Cardiac septum (tissue), 1 donor: ENCODE measurements at regions of chr11 and their contacts with region 1.

Region 1: DNA sequence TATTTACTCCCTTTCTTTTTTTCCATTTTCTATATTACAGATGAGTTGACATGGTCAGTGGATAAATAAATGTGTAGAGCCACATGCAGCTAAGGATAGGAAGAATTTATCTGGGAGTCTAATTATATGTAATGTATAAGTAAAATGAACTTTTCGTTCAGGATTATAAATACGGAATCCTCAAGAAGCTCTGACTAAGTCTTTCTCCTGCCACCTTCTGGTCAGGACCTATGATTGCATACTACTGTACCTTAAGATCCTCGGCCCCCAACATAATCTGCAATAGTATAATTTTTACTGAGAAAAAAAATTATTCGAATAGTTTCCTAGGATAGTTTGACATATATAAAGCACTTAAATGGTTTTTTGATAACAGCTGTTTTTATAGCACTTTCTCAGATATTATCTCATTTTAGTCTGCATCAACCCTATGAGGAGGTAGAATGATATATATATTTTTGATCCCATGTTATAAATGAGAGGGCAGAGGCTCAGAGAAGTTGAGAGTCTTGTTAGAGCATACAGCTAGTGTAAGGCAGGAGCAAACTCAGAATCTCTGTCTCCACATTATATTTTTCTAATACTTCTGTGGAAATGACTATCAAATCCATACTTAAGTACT is 36.1 kb downstream of the CCDC90B start:
- DNase-seq: no peak

Region 2: DNA sequence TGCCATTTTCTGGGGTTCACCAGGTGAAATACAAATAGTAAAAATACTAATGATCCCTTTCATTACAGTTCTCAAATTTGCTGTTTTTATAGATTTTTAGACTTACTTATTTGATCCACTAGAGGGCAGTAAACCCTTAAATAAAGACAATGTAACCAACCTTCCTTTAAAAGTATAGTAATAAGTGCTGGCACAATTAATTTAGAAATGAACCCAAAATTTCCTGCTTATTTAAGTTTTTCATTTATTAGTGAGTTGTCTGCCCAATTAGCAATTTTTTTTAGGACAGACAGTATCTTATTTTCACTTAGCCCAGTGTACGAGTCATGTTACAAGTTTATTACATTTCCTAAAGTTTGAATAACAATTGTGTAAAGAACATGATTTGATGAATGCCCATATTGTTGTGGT is 343.8 kb before region 1 on chr11:
- intact Hi-C with region 1: loop called (anchors 2 kb)
- DNase-seq: no peak